ENCODE measurements at regions of chr7 and their contacts with region 1.

Region 1: DNA sequence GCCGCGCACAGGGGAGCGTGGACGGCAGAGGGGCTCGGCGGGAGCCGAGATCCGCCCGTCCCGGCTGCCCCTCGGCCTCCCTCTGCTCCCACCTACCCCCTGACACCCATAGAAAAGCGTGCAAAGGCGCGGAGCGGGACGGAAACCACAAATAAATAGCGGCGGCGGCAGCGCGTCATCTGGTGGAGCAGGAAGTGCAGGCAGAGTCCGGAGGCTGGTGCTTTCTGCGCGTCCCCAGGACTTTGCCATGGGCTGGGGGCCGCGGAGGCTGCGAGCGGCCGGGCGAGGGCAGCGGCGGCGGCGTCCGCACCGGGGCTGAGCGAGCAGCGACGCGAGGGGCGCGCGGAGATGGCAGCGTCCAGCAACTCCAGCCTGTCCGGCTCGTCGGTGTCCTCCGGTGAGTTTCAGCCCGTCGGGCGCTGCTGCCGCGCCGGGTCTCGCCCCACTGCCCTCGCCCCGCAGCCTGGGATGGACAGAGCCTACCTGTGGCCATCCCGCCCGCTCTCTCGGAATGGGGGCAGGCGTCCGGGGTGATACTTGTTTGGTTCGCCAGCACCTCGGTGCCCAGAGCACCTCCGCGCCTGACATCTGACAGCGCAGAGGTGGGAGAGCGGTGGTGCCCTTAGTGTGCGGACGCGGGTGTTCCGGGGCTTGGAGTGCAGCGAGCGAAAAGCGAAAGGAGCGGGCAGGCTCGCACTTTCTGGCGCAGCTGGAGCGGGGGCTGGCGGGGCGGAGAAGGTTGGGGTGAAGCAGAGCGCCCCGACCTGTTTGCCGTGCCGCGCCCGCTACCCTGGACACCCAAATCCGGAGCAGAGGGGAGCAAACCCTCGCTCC is at the start of gene CHN2:
- DNase-seq: peak; percentile 66 to 77 (median 73)
- H3K4me3 ChIP-seq: peak within 1 kb of the TSS; percentile 79 to 89 (median 83)
- H3K4me3 Mint-ChIP-seq: peak within 1 kb of the TSS; percentile 88 to 100
- H3K27ac ChIP-seq: peak within 1 kb of the TSS in 1 of 2 donors; percentile 75
- H3K27ac Mint-ChIP-seq: peak within 1 kb of the TSS in 6 of 7 donors; percentile 10 to 88 (median 65)
- H3K4me1 ChIP-seq: peaks cover 23 to 36% of the 10 kb centered on the region in 2 donors
- H3K4me1 Mint-ChIP-seq: peaks cover 39% of the 10 kb centered on the region
- H3K27me3 ChIP-seq: peaks cover 9 to 23% of the 10 kb centered on the region in 2 donors
- H3K27me3 Mint-ChIP-seq: peaks cover 24 to 40% (median 24%) of the 10 kb centered on the region in 3 donors
- CTCF ChIP-seq: no peak
- polyA plus RNA-seq, gene CHN2: 26.6 to 66.5 (median 44.8) TPM

Region 2: GRCh38 chr7:29146057-29146706 is 48.6 kb before region 1 on chr7 and contains the start of gene CPVL:
- intact Hi-C with region 1: loop called (anchors 5 to 10 kb)
- DNase-seq: peak; percentile 65 to 78 (median 67)
- H3K4me3 ChIP-seq: peak within 1 kb of the TSS; percentile 69 to 98 (median 95)
- H3K4me3 Mint-ChIP-seq: peak within 1 kb of the TSS; percentile 96 to 100
- H3K27ac ChIP-seq: peak within 1 kb of the TSS; percentile 74 to 90
- H3K27ac Mint-ChIP-seq: peak within 1 kb of the TSS; percentile 93 to 95 (median 95)
- H3K4me1 ChIP-seq: peaks cover 88 to 94% of the 10 kb centered on the region in 2 donors
- H3K4me1 Mint-ChIP-seq: peaks cover 91% of the 10 kb centered on the region
- H3K27me3 ChIP-seq: no peaks in the 10 kb centered on the region
- H3K27me3 Mint-ChIP-seq: peaks cover 0 to 2% (median 0%) of the 10 kb centered on the region in 3 donors
- CTCF ChIP-seq: no peak
- polyA plus RNA-seq, gene CPVL: 410 to 1,111 (median 1,108) TPM

Measured in CD14-positive monocyte (primary cell).